Aorta (tissue), 5 donors: ENCODE measurements at regions of chr16 and their contacts with region 1.

Region 1: DNA sequence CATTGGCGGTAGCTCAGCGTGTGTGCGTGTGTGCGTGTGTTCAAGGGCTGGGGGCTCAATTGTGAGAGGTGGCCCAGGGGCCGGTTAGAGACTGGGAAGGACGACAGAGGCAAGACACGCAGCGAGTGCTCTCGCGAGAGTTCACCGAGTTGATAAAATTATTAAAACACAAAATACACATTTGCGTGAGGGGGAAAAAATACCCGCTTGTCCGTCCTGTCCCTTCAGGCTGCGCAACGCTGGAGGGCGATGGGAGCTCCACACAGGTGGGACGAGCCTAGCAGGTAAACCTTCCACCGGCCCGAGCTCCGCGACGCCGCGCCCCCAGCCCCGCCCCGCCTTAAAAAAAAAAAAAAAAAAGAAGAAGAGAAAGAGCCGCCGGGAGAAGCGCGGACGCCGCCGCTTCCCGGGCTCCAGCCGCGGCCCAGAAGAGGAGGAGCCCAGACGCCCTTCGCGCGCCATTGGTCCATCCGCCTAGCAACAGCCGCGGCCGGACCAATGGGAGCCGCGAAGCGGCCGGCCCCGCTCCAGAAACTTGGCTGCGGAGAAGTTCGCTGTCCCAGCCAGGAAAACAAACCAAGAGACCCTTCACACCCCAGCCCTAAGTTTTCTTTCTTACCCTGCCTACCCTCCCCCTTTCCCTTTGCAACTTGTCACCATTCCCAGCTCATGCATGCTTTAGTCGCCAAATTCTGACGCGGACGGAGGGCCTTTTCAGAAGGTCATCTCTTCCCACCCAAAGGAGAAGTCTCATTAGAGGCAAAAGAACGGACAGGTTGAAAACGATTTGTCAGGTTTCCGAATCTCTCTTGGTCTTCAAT is 169.9 kb upstream of the MAF start:
- DNase-seq: peak; percentile 95
- ATAC-seq: peak; percentile 97
- H3K4me3 ChIP-seq: peak overlapping the region; percentile 53 to 68
- H3K27ac ChIP-seq: peak overlapping the region in 1 of 2 donors; percentile 29
- H3K4me1 ChIP-seq: peaks cover 0 to 8% of the 10 kb centered on the region in 2 donors
- H3K27me3 ChIP-seq: no peaks in the 10 kb centered on the region

Region 2: DNA sequence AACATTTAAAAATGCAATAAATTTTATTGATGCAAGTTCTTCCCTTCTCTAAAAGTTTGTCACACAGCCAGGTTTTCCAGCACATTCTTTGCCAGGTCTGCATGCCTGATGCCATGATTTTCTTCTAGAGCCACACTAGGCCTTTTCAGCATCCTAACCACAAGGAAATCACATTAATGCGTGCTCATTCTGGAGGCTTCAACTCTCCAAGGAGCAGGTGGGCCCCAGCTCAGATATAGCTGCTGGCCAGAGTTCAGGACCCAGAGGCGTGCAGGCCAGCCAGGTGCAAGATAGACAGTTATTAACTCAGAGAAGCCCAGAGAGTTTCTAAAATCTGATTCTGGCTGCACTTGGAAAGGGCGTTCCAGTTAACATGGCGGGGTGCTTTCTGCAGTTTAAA is 45.4 kb before region 1 on chr16:
- intact Hi-C with region 1: loop called in 1 of 2 experiments (anchors 5 kb)
- DNase-seq: no peak
- ATAC-seq: no peak
- H3K4me3 ChIP-seq: no peak overlapping the region
- H3K27ac ChIP-seq: no peak overlapping the region
- H3K4me1 ChIP-seq: peaks cover 0 to 6% of the 10 kb centered on the region in 2 donors
- H3K27me3 ChIP-seq: no peaks in the 10 kb centered on the region